ENCODE measurements at regions of chr3 and their contacts with region 1.

Region 1: GRCh38 chr3:196609343-196609775 is 30.1 kb upstream of the NRROS start:
- DNase-seq: peak; percentile 87
- ATAC-seq: peak; percentile 91 to 97

Region 2: DNA sequence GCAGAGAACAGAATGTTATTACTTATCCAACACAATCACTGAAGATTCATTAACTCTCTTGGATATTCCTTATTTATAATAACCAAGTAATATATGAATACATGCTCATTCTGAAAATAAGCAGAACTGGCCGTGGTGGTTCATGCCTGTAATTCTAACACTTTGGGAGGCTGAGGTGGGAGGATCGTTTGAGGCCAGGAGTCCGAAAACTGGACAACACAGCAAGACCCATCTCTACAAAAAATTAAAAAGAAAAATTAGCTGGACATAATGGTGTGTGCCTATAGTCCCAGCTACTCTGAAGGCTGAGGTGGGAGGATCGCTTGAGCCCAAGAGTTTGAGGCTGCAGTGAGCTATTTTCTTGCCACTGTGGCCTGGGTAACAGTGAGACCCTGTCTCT is 131.7 kb before region 1 on chr3:
- intact Hi-C with region 1: no loop called
- DNase-seq: no peak
- ATAC-seq: no peak

Region 3: GRCh38 chr3:196684548-196685407 is 75.4 kb after region 1 on chr3:
- intact Hi-C with region 1: loop called (anchors 1 to 5 kb)
- DNase-seq: peak; percentile 50
- ATAC-seq: peak; percentile 75 to 79

Region 4: DNA sequence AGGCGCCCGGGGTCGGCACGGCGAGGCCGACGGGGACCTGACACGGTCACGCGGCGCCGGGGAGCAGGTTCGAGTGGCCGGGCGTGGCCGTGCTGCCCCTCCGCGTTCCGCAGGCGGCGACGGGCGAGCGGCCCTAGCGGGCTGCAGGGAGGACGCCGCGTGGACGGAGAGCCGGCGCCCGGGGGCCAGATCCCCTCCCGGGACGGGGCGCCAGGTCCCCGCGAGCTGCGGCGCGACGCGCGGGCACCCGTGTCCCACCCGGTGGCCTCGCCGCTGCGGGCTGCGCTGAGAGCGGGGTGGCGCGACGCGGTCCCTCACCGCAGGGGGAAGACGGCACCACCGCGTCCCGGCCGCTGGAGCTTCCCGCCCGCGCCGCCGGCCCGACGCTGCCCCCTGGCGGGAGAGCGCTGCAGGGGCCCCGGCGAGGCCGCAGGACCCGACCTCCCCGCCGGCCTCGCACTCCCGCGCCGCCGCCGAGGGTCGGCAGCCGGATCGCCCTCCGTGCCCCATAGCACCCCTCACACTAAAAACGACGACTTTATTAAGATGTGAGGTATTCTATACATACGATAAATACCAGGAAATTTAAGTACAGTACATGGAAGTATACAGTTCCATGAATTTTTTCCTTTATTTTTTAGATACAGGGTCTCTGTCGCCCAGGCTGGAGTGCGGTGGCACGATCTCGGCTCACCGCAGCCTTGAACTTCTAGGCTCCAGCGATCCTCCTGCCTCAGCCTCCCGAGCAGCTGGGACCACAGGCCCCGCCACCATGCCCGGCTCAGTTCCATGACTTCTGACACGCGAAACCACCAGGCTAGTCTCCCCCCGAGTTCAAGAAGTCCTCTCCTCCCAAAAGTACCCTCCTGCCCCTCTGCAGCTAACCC is 360.5 kb after region 1 on chr3:
- intact Hi-C with region 1: loop called in 1 of 2 experiments (anchors 5 kb)
- DNase-seq: peak; percentile 70
- ATAC-seq: peak; percentile 86 to 89